ENCODE measurements at regions of chr18 and their contacts with region 1.

Region 1: DNA sequence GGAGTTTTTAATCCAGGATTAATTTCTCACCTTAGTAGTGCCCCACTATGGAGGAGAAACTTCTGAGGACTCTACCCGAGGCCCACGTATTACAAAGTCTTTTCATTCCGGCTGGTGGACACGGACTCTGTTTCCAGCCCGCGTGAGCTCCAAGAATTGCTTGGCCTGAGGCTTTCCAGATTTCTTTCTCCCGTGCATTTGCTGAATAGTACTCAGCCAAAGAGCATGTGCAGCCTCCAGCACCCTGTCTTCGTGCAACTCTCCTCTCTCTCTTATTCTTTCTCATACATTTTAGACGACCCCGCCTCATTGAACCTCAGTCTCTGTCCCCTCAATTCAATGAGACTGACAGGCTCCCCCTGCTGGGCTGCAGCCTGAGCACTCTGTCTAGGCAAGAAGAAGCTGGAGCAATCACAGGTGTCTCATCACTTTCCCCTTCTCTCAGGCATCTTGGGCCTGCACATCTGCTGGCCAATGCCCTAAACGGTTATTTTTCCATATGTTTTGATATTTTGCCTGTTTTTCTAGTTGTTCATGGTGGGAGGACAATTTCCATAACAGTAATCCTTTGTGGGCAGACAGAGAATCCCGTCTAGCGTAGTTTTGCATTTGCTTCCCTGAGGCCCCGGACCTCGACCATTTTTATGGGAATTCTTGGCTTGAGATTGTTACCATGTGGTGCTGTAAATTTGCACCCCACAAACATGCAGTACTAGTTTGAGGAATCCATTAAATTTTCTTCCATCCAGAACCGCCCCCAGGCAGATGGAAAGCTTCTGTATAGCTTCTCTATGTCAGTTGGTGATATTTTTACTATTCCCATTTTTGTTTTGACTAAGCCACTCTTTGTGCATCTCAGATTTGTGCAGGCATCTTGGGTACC is 50.1 kb upstream of the LPIN2 start:
- DNase-seq: peak; percentile 72 to 91 (median 87)
- ATAC-seq: peak; percentile 62 to 66
- H3K4me3 ChIP-seq: no peak overlapping the region
- H3K27ac ChIP-seq: no peak overlapping the region
- H3K4me1 ChIP-seq: no peaks in the 10 kb centered on the region
- H3K27me3 ChIP-seq: no peaks in the 10 kb centered on the region

Region 2: DNA sequence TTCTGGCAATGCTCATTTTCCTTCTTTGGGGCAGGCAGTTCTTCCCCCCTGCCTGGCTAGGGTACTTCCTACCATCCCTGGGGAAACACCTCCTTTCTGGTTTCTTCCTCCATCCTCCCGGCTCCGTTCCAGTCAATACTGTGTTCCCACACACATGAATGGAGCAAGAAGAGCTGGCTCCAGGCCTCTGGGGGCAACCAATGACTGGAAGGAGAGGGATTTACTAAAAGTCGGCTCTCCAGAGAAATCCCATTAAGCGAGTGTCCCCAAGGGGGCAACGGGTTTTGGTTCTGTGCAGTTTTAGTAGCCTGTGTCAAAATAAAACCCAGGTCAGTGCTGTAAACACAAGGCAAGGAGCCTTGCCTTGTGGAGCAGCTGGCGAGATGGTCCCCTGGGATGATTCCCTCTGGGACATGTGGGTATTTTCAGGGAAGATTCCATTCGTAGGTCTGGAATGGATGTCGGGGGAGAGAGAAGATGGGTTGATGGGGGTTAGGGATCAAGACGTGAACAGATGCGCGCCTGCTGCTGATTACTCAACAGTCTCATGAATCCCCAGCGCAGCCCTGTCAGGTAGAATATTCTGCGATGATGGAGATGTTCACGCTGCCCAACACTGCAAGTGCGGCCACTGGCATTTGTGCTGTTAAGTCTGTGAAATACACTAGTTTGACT is 184.2 kb before region 1 on chr18:
- intact Hi-C with region 1: no loop called
- DNase-seq: no peak
- ATAC-seq: no peak
- H3K4me3 ChIP-seq: no peak overlapping the region
- H3K27ac ChIP-seq: no peak overlapping the region
- H3K4me1 ChIP-seq: no peaks in the 10 kb centered on the region
- H3K27me3 ChIP-seq: no peaks in the 10 kb centered on the region

Region 3: GRCh38 chr18:2932247-2933181 is 130.5 kb before region 1 on chr18:
- intact Hi-C with region 1: loop called (anchors 2 to 10 kb)
- DNase-seq: no peak
- ATAC-seq: peak; percentile 55 to 58
- H3K4me3 ChIP-seq: no peak overlapping the region
- H3K27ac ChIP-seq: no peak overlapping the region
- H3K4me1 ChIP-seq: no peaks in the 10 kb centered on the region
- H3K27me3 ChIP-seq: no peaks in the 10 kb centered on the region

Region 4: DNA sequence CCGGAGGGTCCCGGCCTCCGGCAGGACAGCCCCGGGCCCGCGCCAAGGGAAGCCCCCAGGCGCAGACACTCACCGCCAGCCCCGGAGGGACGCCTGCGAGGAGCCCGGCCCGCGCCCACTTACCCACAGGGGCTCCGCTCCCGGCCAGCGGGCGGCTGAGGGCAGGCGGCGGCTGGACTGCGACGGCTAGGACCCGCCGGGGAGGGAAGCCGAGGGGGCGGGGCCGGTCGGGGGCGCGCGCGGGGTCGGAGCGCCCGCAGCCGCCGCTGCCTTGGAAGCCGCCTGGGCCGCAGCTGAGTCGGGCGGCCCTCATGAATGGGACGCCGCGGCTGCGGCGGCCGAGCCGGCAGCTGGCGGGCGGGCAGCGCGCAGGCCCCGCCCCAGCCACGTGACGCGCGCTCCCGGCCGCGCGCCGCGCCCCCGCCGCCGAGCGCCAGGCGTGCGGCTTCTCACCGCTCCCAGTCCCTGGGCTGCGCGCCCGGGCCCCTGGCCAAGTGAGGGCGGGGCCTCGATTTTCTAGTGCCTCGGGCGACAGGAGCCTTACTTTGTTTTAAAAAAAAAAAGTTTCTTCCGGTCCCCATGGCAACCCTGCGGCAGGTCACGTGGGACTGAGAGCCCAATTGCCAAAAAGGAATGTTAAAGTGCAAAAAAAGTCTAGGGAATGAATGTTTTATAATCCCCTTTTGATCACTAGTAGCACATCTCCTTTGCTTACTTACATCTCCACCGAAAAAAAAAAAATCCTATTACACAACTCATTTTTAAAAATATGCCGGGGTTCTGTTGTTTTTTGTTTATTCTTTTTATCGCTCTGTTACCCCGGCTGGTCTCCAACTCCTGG is 49.9 kb before region 1 on chr18 and contains the start of gene LPIN2:
- intact Hi-C with region 1: loop called in 2 of 4 experiments (anchors 5 to 10 kb)
- DNase-seq: peak; percentile 99 to 100 (median 100)
- ATAC-seq: peak; percentile 86 to 89
- H3K4me3 ChIP-seq: peak within 1 kb of the TSS; percentile 79
- H3K27ac ChIP-seq: peak within 1 kb of the TSS; percentile 84
- H3K4me1 ChIP-seq: peaks cover 6% of the 10 kb centered on the region
- H3K27me3 ChIP-seq: no peaks in the 10 kb centered on the region
- total RNA-seq, gene LPIN2: 12.6 to 18.1 (median 14.2) TPM

Measured in right cardiac atrium (tissue), 5 donors.